ENCODE measurements at regions of chr5 and their contacts with region 1.

Region 1: DNA sequence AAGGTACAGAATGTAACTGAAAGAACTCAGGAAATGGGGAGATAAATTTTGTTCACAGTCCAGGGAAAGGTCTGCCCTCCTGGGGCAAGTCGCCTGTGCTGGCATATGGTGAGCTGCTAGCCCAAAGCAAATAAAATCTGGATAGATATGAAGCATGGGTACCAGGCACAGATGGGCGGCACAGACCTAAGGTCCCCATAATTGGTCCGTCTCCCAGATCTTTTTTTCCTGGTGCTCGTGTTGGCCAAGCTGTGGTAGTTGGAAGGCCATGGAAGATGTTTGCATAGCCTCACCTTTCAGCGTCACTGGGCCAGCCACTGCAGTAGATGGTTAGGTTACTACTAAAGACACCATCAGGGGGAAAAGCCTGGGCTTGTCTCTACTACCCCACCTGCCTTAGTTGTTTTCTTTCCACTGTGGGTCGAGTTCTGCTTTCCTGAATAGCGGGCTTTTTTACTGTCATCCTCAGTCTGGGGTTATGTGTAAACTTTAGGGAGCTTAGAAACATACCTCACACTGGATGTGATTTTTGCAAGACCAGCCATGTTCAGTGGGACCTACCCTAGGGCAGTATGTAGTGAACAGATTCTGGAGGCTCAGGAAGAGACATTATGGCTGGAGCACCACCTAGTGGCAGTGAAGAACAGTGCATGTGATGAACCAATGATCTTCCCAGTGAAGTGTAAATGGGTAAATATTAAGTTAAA is 24.2 kb upstream of the GLRX start:
- DNase-seq: peak; percentile 66 to 70 (median 69)
- H3K4me3 ChIP-seq: no peak overlapping the region
- H3K4me3 Mint-ChIP-seq: no peak overlapping the region
- H3K27ac ChIP-seq: no peak overlapping the region
- H3K27ac Mint-ChIP-seq: peak overlapping the region in 2 of 7 donors; percentile 30 to 32
- H3K4me1 ChIP-seq: peaks cover 20% of the 10 kb centered on the region
- H3K4me1 Mint-ChIP-seq: peaks cover 14 to 30% (median 19%) of the 10 kb centered on the region in 4 donors
- H3K27me3 ChIP-seq: no peaks in the 10 kb centered on the region
- H3K27me3 Mint-ChIP-seq: no peaks in the 10 kb centered on the region

Region 2: GRCh38 chr5:95664204-95664786 is 182.4 kb before region 1 on chr5:
- CTCF ChIA-PET with region 1: interaction called, 25 read pairs
- POLR2A ChIA-PET with region 1: interaction called, 3 read pairs
- intact Hi-C with region 1: loop called (anchors 1 kb)
- DNase-seq: peak in 4 of 5 donors; percentile 30 to 34 (median 31)
- H3K4me3 ChIP-seq: no peak overlapping the region
- H3K4me3 Mint-ChIP-seq: no peak overlapping the region
- H3K27ac ChIP-seq: no peak overlapping the region
- H3K27ac Mint-ChIP-seq: no peak overlapping the region
- H3K4me1 ChIP-seq: peaks cover 8% of the 10 kb centered on the region
- H3K4me1 Mint-ChIP-seq: peaks cover 0 to 4% (median 1%) of the 10 kb centered on the region in 4 donors
- H3K27me3 ChIP-seq: no peaks in the 10 kb centered on the region
- H3K27me3 Mint-ChIP-seq: no peaks in the 10 kb centered on the region

Region 3: GRCh38 chr5:95808686-95809413 is 37.9 kb before region 1 on chr5:
- CTCF ChIA-PET with region 1: interaction called, 29 read pairs
- POLR2A ChIA-PET with region 1: interaction called, 13 read pairs
- intact Hi-C with region 1: no loop called
- DNase-seq: peak; percentile 77 to 94 (median 88)
- H3K4me3 ChIP-seq: no peak overlapping the region
- H3K4me3 Mint-ChIP-seq: peak overlapping the region; percentile 57 to 87 (median 72)
- H3K27ac ChIP-seq: peak overlapping the region; percentile 67
- H3K27ac Mint-ChIP-seq: peak overlapping the region; percentile 66 to 95 (median 91)
- H3K4me1 ChIP-seq: peaks cover 59% of the 10 kb centered on the region
- H3K4me1 Mint-ChIP-seq: peaks cover 46 to 66% (median 56%) of the 10 kb centered on the region in 4 donors
- H3K27me3 ChIP-seq: no peaks in the 10 kb centered on the region
- H3K27me3 Mint-ChIP-seq: no peaks in the 10 kb centered on the region

Region 4: DNA sequence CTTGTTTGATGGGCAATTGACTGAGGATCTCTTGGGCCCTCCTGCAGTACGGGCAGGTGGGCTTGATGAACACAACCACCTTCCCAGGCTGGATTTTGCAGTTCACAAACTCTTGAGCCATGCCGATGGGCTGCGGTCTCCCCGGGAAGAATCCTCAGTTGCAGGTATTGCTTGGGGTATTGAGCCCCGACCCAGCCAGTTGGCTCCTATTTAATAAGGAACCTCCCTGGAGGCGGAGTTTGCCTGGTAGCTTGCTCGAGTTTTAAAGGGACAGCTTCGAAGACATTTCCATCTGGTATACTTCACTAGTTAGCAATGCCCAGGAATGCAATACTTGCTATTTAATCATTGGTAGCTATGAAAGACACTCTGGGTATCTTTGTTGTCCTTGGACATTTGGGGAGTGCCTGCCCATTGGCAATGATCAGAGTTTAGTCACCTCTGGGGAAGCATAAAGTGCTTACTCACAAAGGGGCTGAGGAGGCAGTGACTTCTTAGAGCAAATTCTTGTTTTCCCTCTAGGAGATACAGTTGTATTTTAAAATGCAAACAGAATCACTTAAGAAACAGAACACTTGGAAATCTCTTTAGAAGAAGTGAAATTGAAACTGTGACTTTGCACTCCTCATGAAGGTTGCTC is 24.0 kb before region 1 on chr5 and contains the start of gene GLRX:
- CTCF ChIA-PET with region 1: interaction called, 51 read pairs
- POLR2A ChIA-PET with region 1: interaction called, 273 read pairs
- intact Hi-C with region 1: loop called (anchors 1 kb)
- DNase-seq: peak; percentile 56 to 71 (median 64)
- H3K4me3 ChIP-seq: peak within 1 kb of the TSS; percentile 89 to 91
- H3K4me3 Mint-ChIP-seq: peak within 1 kb of the TSS; percentile 98 to 100 (median 99)
- H3K27ac ChIP-seq: peak within 1 kb of the TSS; percentile 79
- H3K27ac Mint-ChIP-seq: peak within 1 kb of the TSS; percentile 76 to 99 (median 97)
- H3K4me1 ChIP-seq: peaks cover 72% of the 10 kb centered on the region
- H3K4me1 Mint-ChIP-seq: peaks cover 55 to 87% (median 60%) of the 10 kb centered on the region in 4 donors
- H3K27me3 ChIP-seq: no peaks in the 10 kb centered on the region
- H3K27me3 Mint-ChIP-seq: no peaks in the 10 kb centered on the region
- total RNA-seq, gene GLRX: 73.9 to 75.9 TPM

Region 5: GRCh38 chr5:95858661-95859326 is 12.1 kb after region 1 on chr5:
- CTCF ChIA-PET with region 1: interaction called, 29 read pairs
- POLR2A ChIA-PET with region 1: no interaction called
- intact Hi-C with region 1: no loop called
- DNase-seq: peak; percentile 83 to 94 (median 84)
- H3K4me3 ChIP-seq: peak overlapping the region in 1 of 2 donors; percentile 7
- H3K4me3 Mint-ChIP-seq: peak overlapping the region; percentile 32 to 75 (median 54)
- H3K27ac ChIP-seq: no peak overlapping the region
- H3K27ac Mint-ChIP-seq: peak overlapping the region in 6 of 7 donors; percentile 21 to 86 (median 65)
- H3K4me1 ChIP-seq: peaks cover 13% of the 10 kb centered on the region
- H3K4me1 Mint-ChIP-seq: peaks cover 13 to 34% (median 25%) of the 10 kb centered on the region in 4 donors
- H3K27me3 ChIP-seq: no peaks in the 10 kb centered on the region
- H3K27me3 Mint-ChIP-seq: peaks cover 0 to 4% of the 10 kb centered on the region in 2 donors

Measured in CD4-positive, alpha-beta memory T cell (primary cell).